Panc1 (cell line): ENCODE measurements at regions of chr2 and their contacts with region 1.

Region 1: GRCh38 chr2:149467436-149467835 is 120.1 kb downstream of the MMADHC start:
- DNase-seq: no peak
- ATAC-seq: no peak
- H3K4me3 ChIP-seq: no peak overlapping the region
- H3K27ac ChIP-seq: no peak overlapping the region
- H3K4me1 ChIP-seq: no peaks in the 10 kb centered on the region
- H3K27me3 ChIP-seq: no peaks in the 10 kb centered on the region
- CTCF ChIP-seq: no peak

Region 2: GRCh38 chr2:149456285-149456684 is 11.2 kb before region 1 on chr2:
- CTCF ChIA-PET with region 1: interaction called, 10 read pairs
- POLR2A ChIA-PET with region 1: no interaction called
- in situ Hi-C with region 1: no loop called
- intact Hi-C with region 1: no loop called
- DNase-seq: no peak
- ATAC-seq: no peak
- H3K4me3 ChIP-seq: no peak overlapping the region
- H3K27ac ChIP-seq: no peak overlapping the region
- H3K4me1 ChIP-seq: no peaks in the 10 kb centered on the region
- H3K27me3 ChIP-seq: no peaks in the 10 kb centered on the region
- CTCF ChIP-seq: peak; percentile 14; the same call in 1 of the 2 replicates